ENCODE measurements at regions of chr10 and their contacts with region 1.

Region 1: GRCh38 chr10:86849181-86849894 is 92.9 kb downstream of the BMPR1A start:
- DNase-seq: peak; percentile 44
- ATAC-seq: peak; percentile 95
- H3K4me3 ChIP-seq: no peak overlapping the region
- H3K27ac ChIP-seq: no peak overlapping the region
- H3K4me1 ChIP-seq: peaks cover 20% of the 10 kb centered on the region
- H3K27me3 ChIP-seq: no peaks in the 10 kb centered on the region
- CTCF ChIP-seq: no peak
- EP300 ChIP-seq: peak; percentile 77 to 85; a peak in 2 of 4 replicates
- POLR2A ChIP-seq: no peak
- RAD21 ChIP-seq: no peak

Region 2: DNA sequence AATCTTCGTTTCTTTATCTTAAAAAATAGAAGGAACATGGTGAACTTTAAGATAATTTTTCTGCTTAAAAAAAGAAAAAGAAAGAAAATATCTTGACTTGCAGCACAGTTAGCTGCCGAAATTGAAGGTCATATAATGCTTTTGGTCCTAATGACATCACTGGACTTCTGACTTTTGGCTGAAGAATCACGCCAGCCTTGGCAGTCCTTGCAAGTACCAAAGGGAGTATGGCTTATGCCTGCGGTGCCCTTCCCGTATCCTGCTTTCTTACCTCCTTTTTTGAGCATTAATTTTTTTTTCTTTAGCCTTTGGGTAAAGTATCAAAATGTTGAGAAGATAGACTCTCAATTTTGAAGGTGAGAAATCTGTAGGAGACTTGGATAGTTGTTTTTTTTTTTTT is 85.9 kb before region 1 on chr10:
- CTCF ChIA-PET with region 1: no interaction called
- POLR2A ChIA-PET with region 1: no interaction called
- RAD21 ChIA-PET with region 1: no interaction called
- SMC1A ChIA-PET with region 1: no interaction called
- in situ Hi-C with region 1: no loop called
- intact Hi-C with region 1: loop called (anchors 5 kb)
- DNase-seq: no peak
- ATAC-seq: no peak
- H3K4me3 ChIP-seq: no peak overlapping the region
- H3K27ac ChIP-seq: no peak overlapping the region
- H3K4me1 ChIP-seq: no peaks in the 10 kb centered on the region
- H3K27me3 ChIP-seq: no peaks in the 10 kb centered on the region
- CTCF ChIP-seq: no peak
- EP300 ChIP-seq: no peak
- POLR2A ChIP-seq: no peak
- RAD21 ChIP-seq: no peak

Measured in GM12878 (cell line).